HEK293 (cell line): ENCODE measurements at regions of chr18 and their contacts with region 1.

Region 1: GRCh38 chr18:499551-500408 is 721 bp downstream of the COLEC12 start:
- H3K4me3 ChIP-seq: peak overlapping the region; percentile 32
- H3K27ac ChIP-seq: peak overlapping the region; percentile 63; the same call in 1 of the 2 replicates
- H3K4me1 ChIP-seq: peaks cover 13% of the 10 kb centered on the region
- CTCF ChIP-seq: peak; percentile 48

Region 2: DNA sequence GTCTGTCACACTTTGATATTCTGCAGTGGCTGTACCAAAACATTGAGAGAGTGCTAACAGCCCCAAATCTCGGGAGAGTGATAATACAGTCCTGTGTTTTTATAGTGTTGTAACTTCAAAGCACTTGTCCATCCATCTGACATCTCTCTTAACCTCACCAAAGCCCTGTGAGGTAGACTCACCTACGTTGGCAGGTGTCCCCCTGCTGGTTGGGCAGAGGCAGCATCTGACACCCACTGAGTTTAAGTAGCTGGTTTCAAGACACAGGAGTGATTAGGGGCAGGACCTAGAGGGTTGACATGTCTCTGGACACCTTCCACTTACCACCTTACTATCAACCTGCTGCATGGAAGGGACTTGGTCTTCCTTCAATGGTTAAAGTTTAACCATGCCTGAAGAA is 22.2 kb before region 1 on chr18:
- CTCF ChIA-PET with region 1: interaction called, 11 read pairs
- POLR2A ChIA-PET with region 1: no interaction called
- H3K4me3 ChIP-seq: no peak overlapping the region
- H3K27ac ChIP-seq: no peak overlapping the region
- H3K4me1 ChIP-seq: peaks cover 7% of the 10 kb centered on the region; the same call in 1 of the 2 replicates
- CTCF ChIP-seq: 0 out of 2 replicates have a peak, but pooled peaks have one; percentile 12

Region 3: GRCh38 chr18:484749-485464 is 14.9 kb before region 1 on chr18:
- CTCF ChIA-PET with region 1: interaction called, 28 read pairs
- POLR2A ChIA-PET with region 1: interaction called, 4 read pairs
- H3K4me3 ChIP-seq: no peak overlapping the region
- H3K27ac ChIP-seq: no peak overlapping the region
- H3K4me1 ChIP-seq: peaks cover 4% of the 10 kb centered on the region; the same call in 1 of the 2 replicates
- CTCF ChIP-seq: no peak

Region 4: GRCh38 chr18:693466-694187 is 193.8 kb after region 1 on chr18:
- CTCF ChIA-PET with region 1: no interaction called
- POLR2A ChIA-PET with region 1: no interaction called
- H3K4me3 ChIP-seq: no peak overlapping the region
- H3K27ac ChIP-seq: no peak overlapping the region
- H3K4me1 ChIP-seq: no peaks in the 10 kb centered on the region
- CTCF ChIP-seq: no peak